ENCODE measurements at regions of chr6 and their contacts with region 1.

Region 1: DNA sequence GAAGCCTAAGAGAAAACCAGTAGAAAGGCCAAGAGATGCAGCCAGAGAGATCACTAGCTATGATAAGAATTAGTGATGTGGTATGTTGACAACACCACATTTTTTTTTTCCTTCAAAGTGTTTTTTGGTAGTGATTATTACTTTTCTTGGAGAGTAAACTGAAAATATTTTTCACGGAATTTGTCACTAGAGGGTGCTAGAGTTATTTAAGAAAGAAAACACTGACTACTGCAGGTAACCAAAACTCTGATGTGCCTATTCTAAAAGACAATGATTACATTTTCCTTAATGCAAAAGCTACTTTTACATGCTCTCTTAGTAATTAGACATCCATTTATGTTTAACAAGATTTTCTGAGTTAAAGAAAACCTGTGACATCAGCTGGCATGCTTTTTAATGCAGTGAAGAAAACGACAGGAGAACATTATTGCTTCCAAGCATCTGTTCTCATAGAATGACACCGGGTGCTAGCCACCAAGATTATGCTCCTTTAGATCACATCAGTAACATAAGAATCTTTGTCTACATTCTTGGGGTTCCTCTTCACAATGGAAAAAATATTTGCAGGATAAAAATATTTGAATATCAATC is 28.8 kb downstream of the RWDD2A start:
- DNase-seq: peak in 3 of 9 donors; percentile 6 to 28 (median 14)
- ATAC-seq: no peak
- H3K4me3 ChIP-seq: no peak overlapping the region
- H3K4me3 Mint-ChIP-seq: no peak overlapping the region
- H3K27ac ChIP-seq: no peak overlapping the region
- H3K27ac Mint-ChIP-seq: no peak overlapping the region
- H3K4me1 ChIP-seq: no peaks in the 10 kb centered on the region
- H3K4me1 Mint-ChIP-seq: no peaks in the 10 kb centered on the region
- H3K27me3 ChIP-seq: no peaks in the 10 kb centered on the region
- H3K27me3 Mint-ChIP-seq: peaks cover 0 to 5% (median 0%) of the 10 kb centered on the region in 5 donors

Region 2: GRCh38 chr6:83514866-83515466 is 293.0 kb after region 1 on chr6:
- CTCF ChIA-PET with region 1: interaction called, 3 read pairs
- POLR2A ChIA-PET with region 1: no interaction called
- intact Hi-C with region 1: loop called (anchors 1 kb)
- DNase-seq: peak in 5 of 9 donors; percentile 6 to 22 (median 18)
- ATAC-seq: peak; percentile 54
- H3K4me3 ChIP-seq: no peak overlapping the region
- H3K4me3 Mint-ChIP-seq: no peak overlapping the region
- H3K27ac ChIP-seq: no peak overlapping the region
- H3K27ac Mint-ChIP-seq: no peak overlapping the region
- H3K4me1 ChIP-seq: peaks cover 0 to 6% of the 10 kb centered on the region in 2 donors
- H3K4me1 Mint-ChIP-seq: peaks cover 0 to 17% (median 8%) of the 10 kb centered on the region in 7 donors
- H3K27me3 ChIP-seq: peaks cover 0 to 10% of the 10 kb centered on the region in 2 donors
- H3K27me3 Mint-ChIP-seq: peaks cover 36 to 59% (median 50%) of the 10 kb centered on the region in 5 donors

Region 3: DNA sequence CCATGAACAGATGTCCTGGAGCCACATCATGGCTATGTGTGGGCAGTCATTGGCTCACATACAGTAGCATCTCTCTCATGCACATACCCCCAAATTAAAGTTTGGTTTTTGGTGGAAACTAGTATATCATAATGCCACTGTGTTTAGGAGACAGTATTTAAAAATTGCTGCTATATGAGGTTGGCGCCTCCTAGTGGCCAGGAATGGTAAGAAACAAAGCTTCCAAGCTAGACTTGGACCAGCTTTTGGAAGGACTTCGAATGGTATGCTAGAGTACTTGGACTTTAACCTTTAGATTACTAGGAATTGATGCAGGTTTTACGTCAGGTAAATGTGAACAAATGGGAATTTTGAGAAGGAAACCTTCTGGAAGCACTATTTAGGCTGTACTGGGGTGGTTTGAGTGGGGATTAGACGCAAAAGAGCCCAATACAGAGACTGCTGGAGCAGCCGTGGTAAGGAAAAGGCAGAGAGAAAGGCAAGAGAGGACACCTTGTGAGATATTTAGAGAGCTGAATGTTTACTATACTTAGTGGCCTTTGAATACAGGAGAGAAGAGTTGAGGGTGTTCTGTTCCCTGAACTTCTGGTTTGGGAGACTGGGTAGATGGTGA is 314.2 kb after region 1 on chr6:
- CTCF ChIA-PET with region 1: interaction called, 12 read pairs
- POLR2A ChIA-PET with region 1: no interaction called
- intact Hi-C with region 1: loop called (anchors 1 kb)
- DNase-seq: peak in 4 of 9 donors; percentile 4 to 32 (median 11)
- ATAC-seq: peak; percentile 38
- H3K4me3 ChIP-seq: no peak overlapping the region
- H3K4me3 Mint-ChIP-seq: no peak overlapping the region
- H3K27ac ChIP-seq: no peak overlapping the region
- H3K27ac Mint-ChIP-seq: no peak overlapping the region
- H3K4me1 ChIP-seq: no peaks in the 10 kb centered on the region
- H3K4me1 Mint-ChIP-seq: no peaks in the 10 kb centered on the region
- H3K27me3 ChIP-seq: peaks cover 0 to 2% of the 10 kb centered on the region in 2 donors
- H3K27me3 Mint-ChIP-seq: peaks cover 0 to 13% (median 4%) of the 10 kb centered on the region in 5 donors

Region 4: GRCh38 chr6:83592770-83593394 is 370.9 kb after region 1 on chr6:
- CTCF ChIA-PET with region 1: no interaction called
- POLR2A ChIA-PET with region 1: no interaction called
- intact Hi-C with region 1: loop called in 1 of 2 experiments (anchors 2 kb)
- DNase-seq: no peak
- ATAC-seq: peak; percentile 67
- H3K4me3 ChIP-seq: no peak overlapping the region
- H3K4me3 Mint-ChIP-seq: no peak overlapping the region
- H3K27ac ChIP-seq: no peak overlapping the region
- H3K27ac Mint-ChIP-seq: no peak overlapping the region
- H3K4me1 ChIP-seq: no peaks in the 10 kb centered on the region
- H3K4me1 Mint-ChIP-seq: peaks cover 0 to 6% (median 0%) of the 10 kb centered on the region in 7 donors
- H3K27me3 ChIP-seq: peaks cover 0 to 3% of the 10 kb centered on the region in 2 donors
- H3K27me3 Mint-ChIP-seq: peaks cover 0 to 3% (median 0%) of the 10 kb centered on the region in 5 donors